ENCODE measurements at regions of chr11 and their contacts with region 1.

Region 1: DNA sequence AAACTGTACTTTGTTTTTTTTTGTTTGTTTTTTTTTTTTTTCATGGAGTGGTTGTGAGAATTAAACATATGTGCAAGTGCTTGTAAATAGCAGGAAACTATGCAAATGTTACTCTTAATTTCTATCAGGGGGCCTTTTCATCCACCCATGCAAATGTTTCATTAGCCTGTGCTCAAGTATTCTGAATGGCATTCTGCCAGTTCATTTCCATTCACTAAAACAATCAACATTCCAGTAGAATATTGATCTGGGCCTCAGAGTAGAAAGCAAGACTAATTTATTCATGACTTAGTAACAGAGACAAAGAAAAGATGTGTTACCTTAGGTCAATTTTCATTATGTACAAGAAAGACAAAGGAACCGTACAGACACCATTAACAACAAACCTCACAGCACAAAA is 971.4 kb downstream of the DLG2 start:
- DNase-seq: no peak
- ATAC-seq: no peak
- H3K4me3 ChIP-seq: no peak overlapping the region
- H3K27ac ChIP-seq: no peak overlapping the region
- H3K4me1 ChIP-seq: peaks cover 0 to 3% (median 0%) of the 10 kb centered on the region in 12 donors
- H3K27me3 ChIP-seq: no peaks in the 10 kb centered on the region
- CTCF ChIP-seq: no peak
- POLR2A ChIP-seq: no peak

Region 2: GRCh38 chr11:84594602-84595001 is 61.1 kb before region 1 on chr11:
- intact Hi-C with region 1: loop called in 1 of 10 experiments (anchors 10 kb)
- DNase-seq: no peak
- ATAC-seq: no peak
- H3K4me3 ChIP-seq: no peak overlapping the region
- H3K27ac ChIP-seq: no peak overlapping the region
- H3K4me1 ChIP-seq: no peaks in the 10 kb centered on the region
- H3K27me3 ChIP-seq: no peaks in the 10 kb centered on the region
- CTCF ChIP-seq: no peak
- POLR2A ChIP-seq: no peak

Region 3: GRCh38 chr11:84720706-84721402 is 65.1 kb after region 1 on chr11:
- intact Hi-C with region 1: loop called in 1 of 10 experiments (anchors 10 kb)
- DNase-seq: peak; percentile 13 to 59 (median 35)
- ATAC-seq: peak; percentile 67 to 88 (median 78)
- H3K4me3 ChIP-seq: peak overlapping the region; percentile 15 to 73 (median 59)
- H3K27ac ChIP-seq: peak overlapping the region in 2 of 12 donors; percentile 11 to 36
- H3K4me1 ChIP-seq: peaks cover 0 to 14% (median 4%) of the 10 kb centered on the region in 12 donors
- H3K27me3 ChIP-seq: no peaks in the 10 kb centered on the region
- CTCF ChIP-seq: no peak
- POLR2A ChIP-seq: no peak

Region 4: DNA sequence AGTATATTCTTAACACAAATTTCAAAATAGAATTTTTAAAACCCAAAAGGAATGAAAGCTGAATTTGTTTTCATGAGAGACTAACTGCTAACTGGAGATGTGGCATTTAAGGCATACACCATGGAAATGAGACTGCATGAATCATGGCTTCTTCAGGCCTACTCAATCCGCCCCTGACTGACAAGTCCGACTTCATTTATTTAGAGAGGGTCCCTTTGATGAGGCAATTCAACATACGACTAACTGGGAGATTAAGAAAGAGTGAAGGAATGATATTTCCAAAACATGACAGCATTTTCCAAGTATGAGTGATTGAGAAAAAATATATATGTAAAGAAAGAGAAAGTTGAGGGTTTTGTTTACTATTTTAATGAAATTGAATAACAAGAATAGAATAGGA is 251.3 kb after region 1 on chr11:
- intact Hi-C with region 1: no loop called
- DNase-seq: no peak
- ATAC-seq: no peak
- H3K4me3 ChIP-seq: no peak overlapping the region
- H3K27ac ChIP-seq: no peak overlapping the region
- H3K4me1 ChIP-seq: peaks cover 0 to 9% (median under 1%) of the 10 kb centered on the region in 12 donors
- H3K27me3 ChIP-seq: no peaks in the 10 kb centered on the region
- CTCF ChIP-seq: no peak
- POLR2A ChIP-seq: no peak

Measured in heart left ventricle (tissue), 16 donors.